Sciatic nerve (tissue), 2 donors: ENCODE measurements at regions of chr1 and their contacts with region 1.

Region 1: GRCh38 chr1:180178511-180179161 is 24.0 kb downstream of the QSOX1 start:
- DNase-seq: peak; percentile 80
- ATAC-seq: peak; percentile 49

Region 2: GRCh38 chr1:179984942-179985341 is 193.7 kb before region 1 on chr1:
- intact Hi-C with region 1: no loop called
- DNase-seq: no peak
- ATAC-seq: no peak

Region 3: DNA sequence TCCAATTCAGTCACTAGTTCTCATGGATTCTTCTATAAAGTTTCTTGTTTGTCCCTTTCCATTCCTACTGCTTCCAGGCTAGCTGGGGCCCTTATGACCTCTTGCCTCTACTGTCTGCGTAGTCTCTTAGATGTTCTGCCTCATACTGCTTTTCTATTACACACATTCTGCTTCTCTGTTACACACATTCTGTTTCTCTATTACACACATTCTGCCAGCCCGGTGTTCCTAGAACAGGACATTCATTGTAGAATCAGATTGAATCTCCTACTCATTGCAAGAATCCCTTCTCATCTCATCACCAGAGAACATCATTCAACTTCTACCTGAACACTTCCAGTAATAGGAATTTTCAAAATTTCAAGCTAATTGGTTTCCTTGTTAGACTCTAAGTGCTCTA is 93.3 kb before region 1 on chr1:
- intact Hi-C with region 1: loop called (anchors 5 kb)
- DNase-seq: no peak
- ATAC-seq: no peak

Region 4: GRCh38 chr1:180851995-180852887 is 673.6 kb after region 1 on chr1:
- intact Hi-C with region 1: loop called (anchors 5 kb)
- DNase-seq: no peak
- ATAC-seq: no peak